Upper lobe of right lung (tissue), 1 donor: ENCODE measurements at regions of chr14 and their contacts with region 1.

Region 1: DNA sequence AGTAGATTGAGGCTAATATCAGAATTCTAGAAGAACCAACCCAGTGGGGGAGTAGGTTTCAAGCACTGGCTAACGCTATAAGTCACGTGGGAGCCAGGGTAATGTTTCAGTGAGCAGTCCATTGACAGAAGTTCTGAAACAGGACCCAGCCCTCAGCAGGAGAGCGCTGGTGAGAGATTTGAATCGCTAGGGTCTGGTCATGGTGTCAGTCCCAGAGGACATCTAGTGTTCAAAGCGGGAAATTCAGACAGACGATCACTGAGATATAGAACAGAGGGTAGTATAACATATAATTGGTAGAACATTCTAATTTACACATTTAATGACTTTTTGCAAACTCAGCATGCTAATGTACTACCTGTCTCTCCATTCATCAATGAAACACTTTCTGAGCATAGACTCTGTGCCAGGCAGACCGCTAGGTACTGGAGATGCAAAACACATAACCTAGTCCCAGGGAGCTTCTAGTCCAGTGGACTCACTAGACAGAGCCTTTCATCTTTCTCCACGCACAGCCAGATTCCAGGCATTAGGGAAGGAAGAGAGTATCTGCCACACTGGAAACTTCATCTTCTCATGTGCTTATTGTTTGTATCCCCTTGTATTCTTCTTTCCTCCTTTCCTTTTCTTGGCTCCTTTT is 35.4 kb upstream of the RNASE3 start:
- DNase-seq: no peak
- ATAC-seq: peak; percentile 98
- H3K4me3 ChIP-seq: no peak overlapping the region
- H3K27ac ChIP-seq: no peak overlapping the region
- H3K4me1 ChIP-seq: peaks cover 3% of the 10 kb centered on the region
- H3K27me3 ChIP-seq: no peaks in the 10 kb centered on the region
- CTCF ChIP-seq: peak; percentile 79

Region 2: DNA sequence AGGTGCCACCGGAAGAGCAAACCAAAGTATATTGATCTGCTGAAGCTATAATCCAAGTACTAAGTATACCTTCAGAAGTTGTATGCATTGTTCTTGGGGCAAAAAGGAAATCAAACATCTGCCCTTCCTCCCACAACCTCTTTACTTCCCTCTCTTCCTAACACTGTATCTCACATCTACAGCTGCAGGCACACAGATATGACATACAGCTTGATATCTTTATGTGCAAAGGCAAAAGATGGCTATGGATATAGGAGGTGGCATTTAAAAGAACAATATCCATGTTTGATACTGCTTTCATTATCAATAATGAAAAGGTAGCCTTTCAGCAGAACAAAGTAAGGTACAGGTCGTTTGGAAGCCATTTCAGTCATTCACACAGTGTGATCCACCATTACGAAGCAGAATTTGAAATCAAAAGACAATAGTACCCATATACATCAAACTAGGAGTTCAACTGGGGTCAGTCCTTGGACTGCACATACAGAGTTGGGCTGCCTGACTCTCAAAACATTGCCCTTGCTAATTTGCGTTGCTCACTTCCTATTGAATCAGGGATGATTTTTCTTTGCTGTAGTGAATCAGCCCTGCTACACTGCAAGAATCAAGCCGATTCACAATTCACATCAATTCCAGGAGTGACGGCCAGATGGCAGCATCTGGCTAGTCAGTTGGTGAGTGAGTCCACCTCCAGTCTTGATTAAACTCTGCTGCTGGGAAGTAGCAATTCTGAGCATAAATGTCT is 158.3 kb before region 1 on chr14:
- intact Hi-C with region 1: loop called (anchors 5 kb)
- DNase-seq: no peak
- ATAC-seq: peak; percentile 97
- H3K4me3 ChIP-seq: no peak overlapping the region
- H3K27ac ChIP-seq: no peak overlapping the region
- H3K4me1 ChIP-seq: no peaks in the 10 kb centered on the region
- H3K27me3 ChIP-seq: no peaks in the 10 kb centered on the region
- CTCF ChIP-seq: peak; percentile 78

Region 3: GRCh38 chr14:20969341-20969740 is 113.6 kb after region 1 on chr14:
- intact Hi-C with region 1: loop called (anchors 10 kb)
- DNase-seq: no peak
- ATAC-seq: no peak
- H3K4me3 ChIP-seq: no peak overlapping the region
- H3K27ac ChIP-seq: no peak overlapping the region
- H3K4me1 ChIP-seq: peaks cover 6% of the 10 kb centered on the region
- H3K27me3 ChIP-seq: no peaks in the 10 kb centered on the region
- CTCF ChIP-seq: no peak